ENCODE measurements at regions of chr3 and their contacts with region 1.

Region 1: DNA sequence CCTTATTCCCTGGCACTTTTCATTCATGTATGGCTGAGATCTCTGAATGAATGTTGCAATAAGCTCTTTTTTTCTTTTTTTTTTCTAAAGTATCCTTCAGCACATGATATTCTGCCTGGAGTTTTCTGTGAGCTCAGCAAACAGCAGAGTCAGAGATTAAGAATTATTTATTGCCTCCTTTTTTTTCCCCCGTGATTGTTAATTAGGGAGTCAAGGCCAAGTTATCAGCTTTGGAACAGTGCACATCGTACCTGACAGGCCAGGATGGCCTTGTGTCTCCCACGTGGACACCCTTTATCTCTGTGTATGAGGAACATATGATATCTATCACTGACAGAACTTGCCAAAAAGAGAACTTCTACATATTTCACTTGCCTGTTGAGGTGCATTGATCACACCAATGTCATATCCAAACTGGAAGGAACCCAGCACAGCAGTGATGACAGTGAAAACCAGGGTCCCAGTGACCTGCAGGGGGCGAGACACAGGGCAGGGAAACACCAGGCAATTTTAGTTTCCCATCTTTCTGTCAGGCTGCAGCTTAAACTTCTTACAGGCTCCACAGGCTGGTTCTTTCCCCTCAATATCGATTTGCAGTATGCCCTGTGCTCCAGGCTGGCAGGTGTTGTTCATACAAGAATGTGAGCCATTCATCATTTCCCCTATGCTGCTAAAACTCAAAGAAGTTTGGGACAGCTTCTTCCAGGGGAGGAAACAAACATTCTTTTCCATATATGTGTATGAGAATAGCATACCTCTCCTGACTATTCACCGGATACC is 8.2 kb downstream of the SLC2A2 start:
- DNase-seq: no peak
- ATAC-seq: peak; percentile 56
- H3K4me3 ChIP-seq: no peak overlapping the region
- H3K27ac ChIP-seq: no peak overlapping the region
- H3K4me1 ChIP-seq: no peaks in the 10 kb centered on the region
- H3K27me3 ChIP-seq: no peaks in the 10 kb centered on the region; a peak in 1 of 4 replicates
- CTCF ChIP-seq: 0 out of 6 replicates have a peak, but pooled peaks of 2 of the 3 experiments have one; percentile 2 to 16
- EP300 ChIP-seq: no peak
- POLR2A ChIP-seq: no peak
- RAD21 ChIP-seq: no peak

Region 2: DNA sequence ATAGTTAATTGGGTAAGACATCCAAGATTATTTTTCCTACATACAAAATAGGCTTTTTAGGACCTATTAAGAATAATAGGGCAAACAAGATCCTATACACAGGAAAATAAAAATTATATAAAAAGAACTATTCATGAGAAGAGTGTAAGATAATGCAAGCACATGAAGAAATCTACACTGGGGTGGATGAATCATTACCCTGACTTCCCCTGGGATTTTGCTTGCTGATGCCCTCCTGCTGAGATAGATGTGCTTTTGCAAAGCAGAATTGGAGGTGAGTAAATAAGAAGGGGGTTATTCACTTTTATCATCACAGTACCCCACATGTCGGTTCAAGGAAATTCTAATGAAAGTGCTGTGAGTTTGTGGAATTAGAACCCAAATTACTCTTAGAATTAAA is 40.4 kb before region 1 on chr3:
- CTCF ChIA-PET with region 1: no interaction called
- POLR2A ChIA-PET with region 1: no interaction called
- RAD21 ChIA-PET with region 1: no interaction called
- SMC1A ChIA-PET with region 1: no interaction called
- in situ Hi-C with region 1: no loop called
- intact Hi-C with region 1: loop called (anchors 5 kb)
- DNase-seq: no peak
- ATAC-seq: no peak
- H3K4me3 ChIP-seq: no peak overlapping the region
- H3K27ac ChIP-seq: no peak overlapping the region
- H3K4me1 ChIP-seq: no peaks in the 10 kb centered on the region
- H3K27me3 ChIP-seq: no peaks in the 10 kb centered on the region; a peak in 2 of 4 replicates
- CTCF ChIP-seq: no peak
- EP300 ChIP-seq: no peak
- POLR2A ChIP-seq: no peak
- RAD21 ChIP-seq: no peak